Activated CD8-positive, alpha-beta memory T cell treated with anti-CD3 and anti-CD28 coated beads, Interleukin-2, amount 10 ng/mL, durations not matched to agents 7 days and 5 days (primary cell): ENCODE measurements at regions of chr10 and their contacts with region 1.

Region 1: GRCh38 chr10:100009793-100010676 is at the start of gene DNMBP:
- DNase-seq: peak; percentile 87
- ATAC-seq: peak; percentile 99
- H3K4me3 Mint-ChIP-seq: peak within 1 kb of the TSS; percentile 81
- H3K27ac Mint-ChIP-seq: peak within 1 kb of the TSS; percentile 53
- H3K4me1 Mint-ChIP-seq: peaks cover 41% of the 10 kb centered on the region
- H3K27me3 Mint-ChIP-seq: peaks cover 28% of the 10 kb centered on the region
- total RNA-seq, gene DNMBP: 3.4 to 5.1 TPM

Region 2: DNA sequence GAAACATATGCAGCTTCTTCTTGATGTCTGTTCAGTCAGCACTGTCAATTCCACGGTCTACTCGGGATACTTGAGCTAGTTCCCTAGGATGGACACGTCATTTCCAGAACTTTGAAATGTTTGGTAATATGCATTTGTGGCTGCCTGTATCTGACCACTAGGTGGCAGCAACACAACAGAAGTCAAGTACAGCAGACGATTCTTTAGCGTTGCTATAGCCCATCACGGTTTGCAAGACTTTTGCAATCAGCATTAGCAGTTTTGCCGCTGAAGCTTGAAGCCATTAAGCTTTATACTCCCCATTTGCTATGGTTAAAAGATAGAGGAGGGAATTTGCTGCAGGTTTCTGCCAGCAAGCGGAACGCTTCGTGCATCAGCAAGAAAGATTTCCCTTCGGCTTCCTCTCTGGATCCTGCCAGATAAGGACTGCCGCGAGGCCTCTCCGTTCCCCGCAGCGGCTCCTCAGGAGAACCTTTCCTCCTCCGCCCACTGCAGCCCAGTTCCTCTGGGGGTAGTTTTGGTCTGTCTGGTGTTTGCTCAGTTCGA is 164.1 kb before region 1 on chr10:
- CTCF ChIA-PET with region 1: interaction called, 72 read pairs
- DNase-seq: peak; percentile 82
- ATAC-seq: peak; percentile 96
- H3K4me3 Mint-ChIP-seq: peak overlapping the region; percentile 1
- H3K27ac Mint-ChIP-seq: no peak overlapping the region
- H3K4me1 Mint-ChIP-seq: peaks cover 9% of the 10 kb centered on the region
- H3K27me3 Mint-ChIP-seq: no peaks in the 10 kb centered on the region

Region 3: GRCh38 chr10:99870123-99870730 is 139.8 kb before region 1 on chr10:
- CTCF ChIA-PET with region 1: interaction called, 10 read pairs
- DNase-seq: peak; percentile 66
- ATAC-seq: peak; percentile 91
- H3K4me3 Mint-ChIP-seq: peak overlapping the region; percentile 55
- H3K27ac Mint-ChIP-seq: peak overlapping the region; percentile 48
- H3K4me1 Mint-ChIP-seq: peaks cover 28% of the 10 kb centered on the region
- H3K27me3 Mint-ChIP-seq: peaks cover 71% of the 10 kb centered on the region

Region 4: GRCh38 chr10:99999319-100000108 is 10.5 kb before region 1 on chr10:
- CTCF ChIA-PET with region 1: interaction called, 30 read pairs
- DNase-seq: no peak
- ATAC-seq: no peak
- H3K4me3 Mint-ChIP-seq: no peak overlapping the region
- H3K27ac Mint-ChIP-seq: no peak overlapping the region
- H3K4me1 Mint-ChIP-seq: peaks cover 9% of the 10 kb centered on the region
- H3K27me3 Mint-ChIP-seq: no peaks in the 10 kb centered on the region

Region 5: GRCh38 chr10:100046021-100046486 is 36.0 kb after region 1 on chr10:
- CTCF ChIA-PET with region 1: interaction called, 17 read pairs
- DNase-seq: peak; percentile 85
- ATAC-seq: peak; percentile 78
- H3K4me3 Mint-ChIP-seq: no peak overlapping the region
- H3K27ac Mint-ChIP-seq: no peak overlapping the region
- H3K4me1 Mint-ChIP-seq: no peaks in the 10 kb centered on the region
- H3K27me3 Mint-ChIP-seq: peaks cover 7% of the 10 kb centered on the region